GM10248 (cell line): ENCODE measurements at regions of chr5 and their contacts with region 1.

Region 1: GRCh38 chr5:134527146-134527960 is 1.9 kb downstream of the JADE2 start:
- DNase-seq: peak; percentile 88
- CTCF ChIP-seq: peak; percentile 76

Region 2: GRCh38 chr5:134370871-134371833 is 156.2 kb before region 1 on chr5 and contains the start of gene UBE2B:
- CTCF ChIA-PET with region 1: interaction called, 4 read pairs
- POLR2A ChIA-PET with region 1: interaction called, 13 read pairs
- DNase-seq: peak; percentile 94
- CTCF ChIP-seq: no peak

Region 3: DNA sequence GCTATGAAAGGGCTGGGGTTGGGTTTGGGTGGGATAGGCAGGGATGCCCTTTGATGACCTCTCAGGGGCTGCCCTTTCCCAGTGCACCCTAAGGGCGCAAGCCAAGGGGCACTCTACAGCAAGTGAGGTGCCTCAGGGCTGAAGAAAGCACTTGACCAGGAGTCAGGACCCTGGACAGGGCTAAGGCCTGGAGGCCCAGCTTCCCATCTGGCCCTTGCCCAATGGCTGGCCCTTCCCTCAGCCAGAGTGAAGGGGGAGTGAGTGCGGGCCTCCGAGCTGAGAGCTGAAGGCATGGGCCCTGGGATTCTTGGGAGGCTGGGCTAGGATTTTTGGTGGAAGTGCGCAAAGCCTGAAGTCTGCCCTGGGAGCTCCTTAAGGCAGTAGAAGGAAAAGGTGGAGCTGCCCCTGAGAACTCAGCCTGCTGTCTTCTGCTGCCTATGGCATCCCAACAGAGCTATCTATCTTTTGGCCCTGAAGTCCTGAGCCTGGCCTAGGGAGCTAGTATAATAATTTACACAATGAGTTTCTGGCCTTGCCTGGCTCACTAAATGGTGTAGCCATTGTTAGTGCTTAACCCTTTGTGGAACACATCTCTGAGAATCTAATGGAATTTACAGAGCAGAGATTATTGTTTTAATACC is 14.5 kb after region 1 on chr5:
- CTCF ChIA-PET with region 1: interaction called, 143 read pairs
- POLR2A ChIA-PET with region 1: interaction called, 6 read pairs
- DNase-seq: no peak
- CTCF ChIP-seq: no peak

Region 4: DNA sequence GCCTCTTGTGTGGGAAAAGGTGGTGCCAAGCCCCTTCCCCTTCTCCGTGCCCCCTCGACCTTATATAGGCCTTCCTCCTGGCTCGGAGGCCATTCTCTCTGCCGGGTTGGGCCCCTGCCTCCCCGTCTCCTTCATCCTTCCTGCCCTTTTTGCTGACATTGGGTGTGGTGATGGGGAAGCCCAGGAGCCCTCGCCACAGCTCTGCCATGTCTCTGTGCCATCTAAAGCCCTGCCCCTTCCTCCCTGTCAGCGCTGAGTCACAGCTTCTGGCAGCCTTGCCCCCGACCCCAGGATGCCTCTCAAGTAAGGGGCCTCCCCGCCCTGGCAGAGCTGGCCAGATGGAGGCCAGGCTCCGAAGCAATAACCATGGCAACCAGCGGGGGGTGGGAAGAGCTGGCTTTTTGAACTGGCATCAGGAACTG is 28.5 kb after region 1 on chr5:
- CTCF ChIA-PET with region 1: interaction called, 20 read pairs
- POLR2A ChIA-PET with region 1: no interaction called
- DNase-seq: peak; percentile 73
- CTCF ChIP-seq: no peak

Region 5: GRCh38 chr5:134738133-134738962 is 211.0 kb after region 1 on chr5 and contains the start of gene CAMLG:
- CTCF ChIA-PET with region 1: no interaction called
- POLR2A ChIA-PET with region 1: no interaction called
- DNase-seq: peak; percentile 95
- CTCF ChIP-seq: peak; percentile 87